ENCODE measurements at regions of chr12 and their contacts with region 1.

Region 1: DNA sequence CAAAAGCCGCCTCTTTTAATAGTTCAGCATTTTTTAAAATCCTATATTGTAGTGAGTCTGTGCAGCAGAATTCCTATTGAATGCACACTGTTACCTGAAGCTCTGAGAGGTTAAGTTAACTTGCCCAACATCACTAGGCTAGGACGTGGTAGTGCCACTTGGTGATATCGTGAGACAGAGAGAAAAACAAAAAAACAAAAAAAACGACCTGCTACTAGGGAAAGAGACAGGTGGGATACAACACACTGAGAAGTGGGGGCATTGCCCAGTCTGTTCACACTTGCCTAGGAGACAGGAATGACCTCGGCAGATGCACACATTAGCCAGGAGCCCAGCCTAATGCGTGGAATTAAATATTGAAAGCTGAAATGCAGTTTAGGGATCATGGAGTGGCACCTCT is 129.7 kb upstream of the CCND2 start:
- DNase-seq: no peak
- H3K4me3 Mint-ChIP-seq: no peak overlapping the region
- H3K27ac Mint-ChIP-seq: peak overlapping the region; percentile 64
- H3K4me1 Mint-ChIP-seq: peaks cover 95% of the 10 kb centered on the region
- H3K27me3 Mint-ChIP-seq: no peaks in the 10 kb centered on the region

Region 2: GRCh38 chr12:3973978-3974644 is 169.8 kb before region 1 on chr12:
- intact Hi-C with region 1: loop called (anchors 1 kb)
- DNase-seq: no peak
- H3K4me3 Mint-ChIP-seq: peak overlapping the region; percentile 30
- H3K27ac Mint-ChIP-seq: peak overlapping the region; percentile 84
- H3K4me1 Mint-ChIP-seq: peaks cover 63% of the 10 kb centered on the region
- H3K27me3 Mint-ChIP-seq: peaks cover 2% of the 10 kb centered on the region

Region 3: DNA sequence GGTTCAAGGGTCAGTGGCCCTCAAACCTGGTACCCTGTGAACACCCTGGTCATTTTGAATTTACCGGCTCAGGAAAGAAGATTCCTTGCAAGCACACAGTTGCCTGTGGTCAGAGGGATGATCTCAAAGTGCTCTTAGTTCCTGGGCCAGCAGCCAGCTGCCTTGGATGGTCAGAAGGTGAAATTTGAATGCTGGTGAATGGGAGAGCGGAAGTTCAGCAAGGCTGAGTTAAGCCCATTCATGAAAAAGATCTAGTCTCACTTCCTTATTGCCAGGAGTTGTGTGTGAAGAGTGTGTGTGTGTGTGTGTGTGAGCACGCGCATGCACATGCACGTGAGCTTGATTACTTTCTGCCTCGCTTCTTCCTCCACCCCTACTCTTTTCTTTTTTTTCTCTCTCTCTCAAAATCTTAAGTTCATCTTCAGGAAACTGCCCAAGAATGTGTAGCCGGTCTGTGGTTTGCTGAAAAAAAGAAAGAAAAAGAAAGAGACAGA is 25.8 kb before region 1 on chr12:
- intact Hi-C with region 1: loop called (anchors 1 kb)
- DNase-seq: peak; percentile 9
- H3K4me3 Mint-ChIP-seq: peak overlapping the region; percentile 62
- H3K27ac Mint-ChIP-seq: peak overlapping the region; percentile 82
- H3K4me1 Mint-ChIP-seq: peaks cover 66% of the 10 kb centered on the region
- H3K27me3 Mint-ChIP-seq: no peaks in the 10 kb centered on the region

Region 4: GRCh38 chr12:4178424-4179170 is 34.7 kb after region 1 on chr12:
- intact Hi-C with region 1: loop called (anchors 1 kb)
- DNase-seq: no peak
- H3K4me3 Mint-ChIP-seq: peak overlapping the region; percentile 11
- H3K27ac Mint-ChIP-seq: peak overlapping the region; percentile 93
- H3K4me1 Mint-ChIP-seq: peaks cover 23% of the 10 kb centered on the region
- H3K27me3 Mint-ChIP-seq: no peaks in the 10 kb centered on the region

Region 5: DNA sequence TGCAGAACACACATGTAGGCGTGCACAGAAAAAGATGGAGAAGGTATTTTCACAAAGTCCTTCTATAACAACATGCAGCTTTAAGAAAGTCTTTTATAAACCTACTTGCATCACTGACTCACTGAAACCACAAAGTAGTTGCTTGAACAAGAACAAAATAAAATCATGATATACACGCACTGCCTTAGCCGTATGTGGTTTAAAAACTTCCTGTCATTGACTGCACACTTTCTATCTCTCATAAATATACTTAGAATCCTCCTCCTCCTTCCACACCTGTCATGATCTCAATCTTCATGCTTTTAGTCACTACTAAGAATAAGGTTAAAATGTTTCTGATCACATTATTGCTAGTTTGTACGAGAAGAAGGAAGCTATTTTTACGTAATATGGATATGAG is 363.0 kb after region 1 on chr12:
- intact Hi-C with region 1: loop called (anchors 5 kb)
- DNase-seq: peak; percentile 26
- H3K4me3 Mint-ChIP-seq: peak overlapping the region; percentile 31
- H3K27ac Mint-ChIP-seq: peak overlapping the region; percentile 35
- H3K4me1 Mint-ChIP-seq: peaks cover 26% of the 10 kb centered on the region
- H3K27me3 Mint-ChIP-seq: no peaks in the 10 kb centered on the region